Activated CD4-positive, alpha-beta T cell treated with anti-CD3 and anti-CD28 coated beads, Interleukin-2, amount 10 ng/mL, durations not matched to agents 7 days and 5 days (primary cell): ENCODE measurements at regions of chr11 and their contacts with region 1.

Region 1: DNA sequence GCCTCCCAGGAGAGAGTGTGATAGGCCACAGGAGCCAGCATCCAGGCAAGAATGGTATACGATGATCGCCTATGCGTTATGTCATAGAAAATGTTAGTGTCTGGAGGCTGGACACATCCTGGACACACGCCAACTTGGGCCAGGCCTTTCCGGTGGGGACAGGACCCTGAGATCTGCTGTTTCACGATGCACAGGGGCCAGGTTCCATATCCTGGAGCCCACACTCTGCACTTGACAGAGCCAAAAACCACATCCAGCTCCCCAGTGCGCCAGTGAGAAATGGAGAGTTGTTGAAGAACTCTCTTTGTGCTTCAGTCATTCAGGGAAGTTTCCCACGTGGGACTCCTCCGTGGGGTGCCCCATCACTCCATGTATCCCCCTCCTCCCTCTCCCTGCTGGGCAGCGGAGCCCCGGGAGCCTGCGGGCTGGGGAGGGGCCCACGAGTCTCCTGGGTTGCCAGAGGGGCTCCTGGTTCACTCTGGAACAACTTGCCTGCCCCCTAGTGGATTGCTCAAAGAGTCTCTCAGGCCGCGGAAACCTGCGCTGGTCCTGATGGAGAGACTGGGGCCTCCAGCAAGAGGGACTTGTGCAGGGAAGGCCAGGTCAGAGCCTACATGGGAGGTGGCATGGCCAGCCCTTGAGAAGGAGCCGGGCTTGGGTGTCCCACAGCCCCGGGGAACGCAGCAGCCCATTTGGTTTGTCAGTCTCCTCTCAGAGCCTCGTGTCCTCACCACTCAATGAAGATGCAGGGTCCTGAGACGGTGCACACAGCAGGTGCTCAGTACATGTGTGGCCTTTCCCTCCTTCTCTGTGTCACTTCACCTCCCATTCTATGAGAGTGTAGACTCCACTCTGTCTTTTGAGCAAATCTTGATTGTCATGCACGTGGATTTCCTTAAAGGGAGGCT is 10.2 kb upstream of the LRRC32 start:
- DNase-seq: peak; percentile 71
- H3K4me3 Mint-ChIP-seq: no peak overlapping the region
- H3K27ac Mint-ChIP-seq: no peak overlapping the region
- H3K4me1 Mint-ChIP-seq: peaks cover 15% of the 10 kb centered on the region
- H3K27me3 Mint-ChIP-seq: peaks cover 1% of the 10 kb centered on the region

Region 2: GRCh38 chr11:76577199-76577920 is 103.4 kb before region 1 on chr11:
- CTCF ChIA-PET with region 1: no interaction called
- POLR2A ChIA-PET with region 1: no interaction called
- DNase-seq: no peak
- H3K4me3 Mint-ChIP-seq: no peak overlapping the region
- H3K27ac Mint-ChIP-seq: no peak overlapping the region
- H3K4me1 Mint-ChIP-seq: no peaks in the 10 kb centered on the region
- H3K27me3 Mint-ChIP-seq: peaks cover 7% of the 10 kb centered on the region

Region 3: DNA sequence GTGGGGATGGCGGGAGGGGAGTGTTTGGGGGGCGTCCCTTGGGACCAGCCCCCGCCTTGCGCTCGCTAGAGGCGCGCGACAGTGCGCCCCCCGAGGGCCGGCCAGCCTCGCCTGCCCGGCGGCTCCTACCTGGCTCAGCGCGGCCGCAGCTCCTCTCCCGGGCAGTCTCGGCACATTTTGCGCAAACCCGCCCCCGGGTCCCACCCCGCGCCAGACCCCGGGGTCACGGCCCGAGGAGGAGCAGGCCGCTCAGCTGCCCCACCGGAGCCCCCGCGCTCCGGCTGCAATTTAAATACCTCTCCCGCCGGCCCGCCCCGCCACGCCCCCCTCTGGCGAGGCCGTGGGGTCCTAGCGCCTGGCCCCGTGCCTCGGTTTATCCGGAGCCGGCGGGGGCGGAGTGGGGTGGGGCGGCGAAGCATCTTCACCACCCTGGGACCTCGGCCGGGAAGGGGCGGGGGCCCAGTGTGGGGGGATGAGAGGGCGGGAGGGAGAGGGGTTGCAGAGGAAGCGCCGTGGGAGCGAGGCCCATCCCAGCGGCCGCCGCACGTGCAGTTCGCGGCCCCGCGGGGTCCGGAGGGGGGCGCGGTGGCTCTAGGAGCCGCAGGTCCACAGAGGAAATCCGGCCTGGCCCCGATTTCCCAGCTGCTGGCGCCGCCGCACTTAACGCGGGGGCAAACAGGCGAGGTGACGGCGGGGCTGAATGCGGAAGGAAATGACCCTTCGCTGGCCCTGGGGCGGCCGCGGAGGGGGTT is 10.1 kb before region 1 on chr11 and contains the start of gene LRRC32:
- CTCF ChIA-PET with region 1: interaction called, 20 read pairs
- POLR2A ChIA-PET with region 1: no interaction called
- DNase-seq: no peak
- H3K4me3 Mint-ChIP-seq: peak within 1 kb of the TSS; percentile 43
- H3K27ac Mint-ChIP-seq: no peak within 1 kb of the TSS
- H3K4me1 Mint-ChIP-seq: peaks cover 22% of the 10 kb centered on the region
- H3K27me3 Mint-ChIP-seq: peaks cover 29% of the 10 kb centered on the region
- total RNA-seq, gene LRRC32: 0.82 to 0.87 TPM

Region 4: DNA sequence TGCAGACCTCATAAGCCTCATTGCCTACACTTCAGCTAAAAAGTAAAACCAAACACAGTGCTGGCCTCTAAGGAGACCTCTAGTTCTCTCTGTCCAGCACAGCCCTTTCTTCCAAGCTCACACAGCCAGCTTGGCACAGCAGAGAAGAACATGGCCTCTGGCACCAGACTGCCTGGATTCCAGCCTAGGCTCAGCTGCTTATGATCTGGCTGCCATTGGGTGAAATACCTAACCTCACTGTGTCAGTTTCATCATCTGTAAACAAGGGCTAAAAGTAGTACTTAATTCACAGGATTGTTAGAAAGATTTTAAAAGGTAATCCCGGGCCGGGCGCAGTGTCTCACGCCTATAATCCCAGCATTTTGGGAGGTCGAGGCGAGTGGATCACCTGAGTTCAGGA is 170.0 kb after region 1 on chr11:
- CTCF ChIA-PET with region 1: no interaction called
- POLR2A ChIA-PET with region 1: no interaction called
- DNase-seq: no peak
- H3K4me3 Mint-ChIP-seq: no peak overlapping the region
- H3K27ac Mint-ChIP-seq: no peak overlapping the region
- H3K4me1 Mint-ChIP-seq: no peaks in the 10 kb centered on the region
- H3K27me3 Mint-ChIP-seq: peaks cover 10% of the 10 kb centered on the region